Common myeloid progenitor, CD34-positive (primary cell): ENCODE measurements at regions of chr22 and their contacts with region 1.

Region 1: GRCh38 chr22:19535001-19535400 is 10.8 kb upstream of the CLDN5 start:
- DNase-seq: peak; percentile 81 to 96 (median 94)
- H3K4me3 ChIP-seq: no peak overlapping the region
- H3K27ac ChIP-seq: no peak overlapping the region
- H3K4me1 ChIP-seq: peaks cover 0 to 25% (median 13%) of the 10 kb centered on the region in 4 experiments
- H3K27me3 ChIP-seq: no peaks in the 10 kb centered on the region

Region 2: GRCh38 chr22:20829491-20830134 is 1294.6 kb after region 1 on chr22:
- CTCF ChIA-PET with region 1: no interaction called
- POLR2A ChIA-PET with region 1: interaction called, 12 read pairs
- DNase-seq: peak; percentile 43 to 77 (median 54)
- H3K4me3 ChIP-seq: no peak overlapping the region
- H3K27ac ChIP-seq: no peak overlapping the region
- H3K4me1 ChIP-seq: peaks cover 0 to 1% (median 0%) of the 10 kb centered on the region in 4 experiments
- H3K27me3 ChIP-seq: no peaks in the 10 kb centered on the region